ENCODE measurements at regions of chr7 and their contacts with region 1.

Region 1: GRCh38 chr7:129218514-129219062 is 6.2 kb upstream of the AHCYL2 start:
- DNase-seq: peak; percentile 84
- ATAC-seq: peak; percentile 82
- H3K4me3 ChIP-seq: no peak overlapping the region
- H3K4me3 Mint-ChIP-seq: no peak overlapping the region
- H3K27ac ChIP-seq: no peak overlapping the region
- H3K27ac Mint-ChIP-seq: peak overlapping the region; percentile 37
- H3K4me1 ChIP-seq: peaks cover 11 to 20% of the 10 kb centered on the region in 2 donors
- H3K4me1 Mint-ChIP-seq: peaks cover 16% of the 10 kb centered on the region
- H3K27me3 ChIP-seq: no peaks in the 10 kb centered on the region
- H3K27me3 Mint-ChIP-seq: peaks cover 4% of the 10 kb centered on the region
- CTCF ChIP-seq: peak; percentile 96

Region 2: GRCh38 chr7:129231666-129232065 is 13.1 kb after region 1 on chr7:
- CTCF ChIA-PET with region 1: interaction called, 52 read pairs
- POLR2A ChIA-PET with region 1: no interaction called
- intact Hi-C with region 1: no loop called
- DNase-seq: no peak
- ATAC-seq: no peak
- H3K4me3 ChIP-seq: no peak overlapping the region
- H3K4me3 Mint-ChIP-seq: no peak overlapping the region
- H3K27ac ChIP-seq: no peak overlapping the region
- H3K27ac Mint-ChIP-seq: no peak overlapping the region
- H3K4me1 ChIP-seq: peaks cover 0 to 1% of the 10 kb centered on the region in 2 donors
- H3K4me1 Mint-ChIP-seq: peaks cover 3% of the 10 kb centered on the region
- H3K27me3 ChIP-seq: no peaks in the 10 kb centered on the region
- H3K27me3 Mint-ChIP-seq: no peaks in the 10 kb centered on the region
- CTCF ChIP-seq: no peak

Region 3: GRCh38 chr7:129271500-129272355 is 53.1 kb after region 1 on chr7:
- CTCF ChIA-PET with region 1: interaction called, 265 read pairs
- POLR2A ChIA-PET with region 1: interaction called, 3 read pairs
- intact Hi-C with region 1: loop called (anchors 1 kb)
- DNase-seq: peak; percentile 83
- ATAC-seq: peak; percentile 89
- H3K4me3 ChIP-seq: peak overlapping the region in 1 of 5 experiments; percentile 11
- H3K4me3 Mint-ChIP-seq: peak overlapping the region; percentile 64
- H3K27ac ChIP-seq: no peak overlapping the region
- H3K27ac Mint-ChIP-seq: no peak overlapping the region
- H3K4me1 ChIP-seq: peaks cover 11 to 13% of the 10 kb centered on the region in 2 donors
- H3K4me1 Mint-ChIP-seq: peaks cover 18% of the 10 kb centered on the region
- H3K27me3 ChIP-seq: no peaks in the 10 kb centered on the region
- H3K27me3 Mint-ChIP-seq: no peaks in the 10 kb centered on the region
- CTCF ChIP-seq: peak; percentile 91

Region 4: GRCh38 chr7:129285111-129285510 is 66.5 kb after region 1 on chr7:
- CTCF ChIA-PET with region 1: interaction called, 22 read pairs
- POLR2A ChIA-PET with region 1: no interaction called
- intact Hi-C with region 1: no loop called
- DNase-seq: no peak
- ATAC-seq: no peak
- H3K4me3 ChIP-seq: no peak overlapping the region
- H3K4me3 Mint-ChIP-seq: no peak overlapping the region
- H3K27ac ChIP-seq: no peak overlapping the region
- H3K27ac Mint-ChIP-seq: no peak overlapping the region
- H3K4me1 ChIP-seq: no peaks in the 10 kb centered on the region
- H3K4me1 Mint-ChIP-seq: no peaks in the 10 kb centered on the region
- H3K27me3 ChIP-seq: no peaks in the 10 kb centered on the region
- H3K27me3 Mint-ChIP-seq: no peaks in the 10 kb centered on the region
- CTCF ChIP-seq: no peak

Region 5: GRCh38 chr7:129367700-129368388 is 149.3 kb after region 1 on chr7:
- CTCF ChIA-PET with region 1: interaction called, 22 read pairs
- POLR2A ChIA-PET with region 1: no interaction called
- intact Hi-C with region 1: loop called (anchors 5 kb)
- DNase-seq: peak; percentile 79
- ATAC-seq: peak; percentile 85
- H3K4me3 ChIP-seq: peak overlapping the region in 3 of 5 experiments; percentile 15 to 32 (median 23)
- H3K4me3 Mint-ChIP-seq: peak overlapping the region; percentile 69
- H3K27ac ChIP-seq: peak overlapping the region in 1 of 2 donors; percentile 67
- H3K27ac Mint-ChIP-seq: peak overlapping the region; percentile 66
- H3K4me1 ChIP-seq: peaks cover 14 to 15% of the 10 kb centered on the region in 2 donors
- H3K4me1 Mint-ChIP-seq: peaks cover 21% of the 10 kb centered on the region
- H3K27me3 ChIP-seq: no peaks in the 10 kb centered on the region
- H3K27me3 Mint-ChIP-seq: no peaks in the 10 kb centered on the region
- CTCF ChIP-seq: peak; percentile 88

Region 6: DNA sequence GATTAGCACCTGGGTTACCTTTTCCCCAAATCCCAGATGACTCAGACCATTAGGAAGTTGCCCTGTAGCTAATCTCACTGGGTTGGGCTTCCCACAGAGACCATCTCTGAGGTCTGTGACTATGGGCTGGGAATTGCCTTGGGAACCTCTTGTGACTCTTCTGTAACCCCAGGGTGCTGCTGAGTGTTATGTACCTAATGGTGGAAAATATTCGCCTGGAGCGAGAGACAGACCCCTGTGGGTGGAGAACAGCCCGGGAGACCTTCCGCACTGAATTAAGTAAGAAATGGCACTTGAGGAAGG is 235.6 kb after region 1 on chr7:
- CTCF ChIA-PET with region 1: no interaction called
- POLR2A ChIA-PET with region 1: no interaction called
- intact Hi-C with region 1: no loop called
- DNase-seq: no peak
- ATAC-seq: no peak
- H3K4me3 ChIP-seq: no peak overlapping the region
- H3K4me3 Mint-ChIP-seq: no peak overlapping the region
- H3K27ac ChIP-seq: no peak overlapping the region
- H3K27ac Mint-ChIP-seq: no peak overlapping the region
- H3K4me1 ChIP-seq: no peaks in the 10 kb centered on the region
- H3K4me1 Mint-ChIP-seq: no peaks in the 10 kb centered on the region
- H3K27me3 ChIP-seq: no peaks in the 10 kb centered on the region
- H3K27me3 Mint-ChIP-seq: no peaks in the 10 kb centered on the region
- CTCF ChIP-seq: no peak

Region 7: GRCh38 chr7:129468087-129468486 is 249.5 kb after region 1 on chr7:
- CTCF ChIA-PET with region 1: interaction called, 53 read pairs
- POLR2A ChIA-PET with region 1: no interaction called
- intact Hi-C with region 1: loop called (anchors 1 kb)
- DNase-seq: no peak
- ATAC-seq: no peak
- H3K4me3 ChIP-seq: no peak overlapping the region
- H3K4me3 Mint-ChIP-seq: no peak overlapping the region
- H3K27ac ChIP-seq: no peak overlapping the region
- H3K27ac Mint-ChIP-seq: no peak overlapping the region
- H3K4me1 ChIP-seq: no peaks in the 10 kb centered on the region
- H3K4me1 Mint-ChIP-seq: peaks cover 1% of the 10 kb centered on the region
- H3K27me3 ChIP-seq: no peaks in the 10 kb centered on the region
- H3K27me3 Mint-ChIP-seq: no peaks in the 10 kb centered on the region
- CTCF ChIP-seq: no peak